Sigmoid colon (tissue), 7 donors: ENCODE measurements at regions of chr12 and their contacts with region 1.

Region 1: DNA sequence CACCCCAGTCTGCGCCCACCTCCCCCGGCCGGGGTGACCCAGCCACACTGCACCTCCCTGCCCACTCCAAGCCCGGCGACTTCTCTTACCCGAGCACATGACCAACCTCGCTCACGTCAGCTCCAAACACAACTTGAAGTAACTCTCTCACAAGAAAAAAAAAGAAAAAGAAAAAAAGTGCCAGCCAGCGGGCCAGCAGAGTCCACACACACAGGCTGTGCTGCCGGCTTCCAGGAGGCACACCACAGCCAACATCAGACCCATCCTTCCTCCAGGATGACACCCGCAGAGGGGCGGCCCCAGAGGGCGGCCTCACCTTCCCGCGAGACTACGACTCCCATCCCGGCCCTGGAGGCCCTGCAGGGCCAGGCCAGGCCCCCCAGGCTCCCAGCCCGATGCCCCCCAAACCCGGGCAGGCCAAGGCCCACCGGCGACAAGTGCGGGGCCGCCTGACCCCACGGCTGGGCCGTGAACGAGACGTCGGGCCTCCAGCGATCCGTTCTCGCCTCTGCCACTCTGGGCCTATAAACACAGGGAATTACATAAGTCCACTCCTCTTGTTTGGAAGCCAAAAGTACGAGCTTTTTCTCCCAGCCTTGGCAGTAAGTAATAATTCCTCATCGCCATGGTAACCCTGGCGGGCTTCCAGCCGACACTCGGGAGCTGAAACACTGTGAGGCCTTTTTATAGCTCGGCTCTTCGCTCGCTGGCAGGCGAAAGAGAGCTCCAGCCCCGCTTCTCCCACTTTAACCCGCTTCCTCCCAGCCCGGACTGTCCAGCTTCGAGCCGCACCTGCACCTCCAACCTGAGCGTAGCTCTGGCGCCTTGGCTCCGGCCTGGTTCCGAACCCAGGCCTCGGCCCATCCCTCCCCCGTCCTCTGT is 49.1 kb downstream of the NCOR2 start:
- DNase-seq: peak; percentile 100
- H3K4me3 ChIP-seq: peak overlapping the region; percentile 20 to 60 (median 54)
- H3K27ac ChIP-seq: peak overlapping the region; percentile 96 to 99 (median 98)
- H3K4me1 ChIP-seq: peaks cover 0 to 96% (median 91%) of the 10 kb centered on the region in 4 donors
- H3K27me3 ChIP-seq: no peaks in the 10 kb centered on the region
- CTCF ChIP-seq: no peak
- EP300 ChIP-seq: peak in 1 of 4 donors; percentile 78
- POLR2A ChIP-seq: peak; percentile 28 to 45

Region 2: DNA sequence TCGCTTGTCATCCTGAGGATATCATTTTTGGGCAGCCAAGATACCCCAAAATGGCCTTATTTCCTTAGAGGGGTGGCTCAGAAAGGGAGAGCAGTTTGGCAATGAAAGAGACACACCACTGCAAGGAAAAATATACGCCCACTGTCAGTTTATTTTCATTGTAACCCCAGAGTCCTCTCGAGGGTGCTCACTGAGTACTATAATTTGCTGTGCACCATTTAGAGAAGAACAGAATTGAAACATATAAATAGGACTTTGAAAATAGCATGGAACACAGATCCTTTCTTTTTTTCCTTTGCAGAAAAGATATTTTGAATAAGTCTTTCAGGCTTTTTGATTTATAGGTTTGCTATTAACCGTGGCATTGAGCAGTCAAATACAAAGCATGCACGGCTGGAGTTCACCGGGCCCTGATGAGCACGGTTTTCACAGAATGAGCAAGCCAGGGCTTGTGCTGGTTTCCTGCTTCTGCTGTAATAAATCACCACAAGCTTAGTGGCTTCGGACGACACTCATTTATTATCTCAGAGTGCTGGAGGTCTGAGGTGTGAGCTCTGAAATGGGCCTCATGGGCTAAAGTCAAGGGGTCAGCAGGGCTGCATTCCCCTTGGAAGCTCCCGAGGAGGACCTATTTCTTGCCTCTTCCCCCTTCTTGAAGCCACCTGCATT is 393.0 kb before region 1 on chr12:
- intact Hi-C with region 1: no loop called
- DNase-seq: no peak
- H3K4me3 ChIP-seq: no peak overlapping the region
- H3K27ac ChIP-seq: no peak overlapping the region
- H3K4me1 ChIP-seq: no peaks in the 10 kb centered on the region
- H3K27me3 ChIP-seq: no peaks in the 10 kb centered on the region
- CTCF ChIP-seq: no peak
- EP300 ChIP-seq: no peak
- POLR2A ChIP-seq: no peak

Region 3: DNA sequence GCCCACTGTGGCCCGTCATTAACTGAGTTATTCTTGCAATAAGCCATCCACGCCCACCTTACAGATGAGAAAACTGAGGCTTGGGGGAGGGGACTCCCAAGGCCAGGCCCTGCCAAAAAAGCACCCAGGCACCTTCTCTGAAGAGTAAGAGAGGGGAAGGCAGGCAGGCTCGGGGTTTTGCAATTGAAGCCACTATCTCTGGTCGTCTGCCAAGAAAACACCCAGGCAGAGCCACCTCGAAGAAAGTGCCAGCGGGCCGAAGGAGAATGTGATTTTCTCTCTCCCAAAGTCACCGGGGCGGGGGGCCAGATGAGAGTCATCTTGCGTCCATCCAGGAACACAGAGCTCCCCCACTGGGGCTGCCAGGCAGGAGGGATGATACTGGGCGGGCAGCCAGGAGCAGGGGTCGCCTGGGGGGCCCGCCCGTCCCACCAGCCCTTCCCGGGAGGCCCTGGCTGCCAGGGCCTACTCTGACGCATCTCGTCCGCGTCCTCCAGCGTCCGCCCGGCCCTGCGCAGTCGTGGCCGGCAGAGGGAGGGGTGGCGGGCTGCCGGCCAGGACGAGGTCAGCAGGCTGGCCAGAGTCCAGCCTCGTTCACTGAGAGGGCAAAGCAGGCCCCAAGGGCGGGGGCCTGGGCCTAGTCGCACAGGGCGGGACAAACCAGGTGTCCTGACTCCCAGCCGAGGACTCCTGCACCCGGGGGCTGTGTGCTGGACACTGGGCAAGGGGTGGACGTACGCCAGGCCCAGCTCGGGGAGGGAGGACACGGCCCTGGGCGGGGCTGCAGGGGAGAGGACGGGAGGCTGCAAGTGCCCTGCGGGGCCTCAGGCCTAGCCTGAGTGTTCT is 149.0 kb before region 1 on chr12:
- intact Hi-C with region 1: loop called (anchors 2 kb)
- DNase-seq: peak; percentile 97
- H3K4me3 ChIP-seq: peak overlapping the region in 2 of 4 donors; percentile 2 to 12
- H3K27ac ChIP-seq: peak overlapping the region; percentile 88 to 97 (median 92)
- H3K4me1 ChIP-seq: peaks cover 0 to 65% (median 63%) of the 10 kb centered on the region in 4 donors
- H3K27me3 ChIP-seq: no peaks in the 10 kb centered on the region
- CTCF ChIP-seq: peak; percentile 53 to 56 (median 53)
- EP300 ChIP-seq: peak in 3 of 4 donors; percentile 47 to 78 (median 52)
- POLR2A ChIP-seq: peak in 1 of 2 donors; percentile 12

Region 4: GRCh38 chr12:124379938-124380754 is 138.1 kb before region 1 on chr12:
- intact Hi-C with region 1: loop called (anchors 5 kb)
- DNase-seq: peak; percentile 94
- H3K4me3 ChIP-seq: no peak overlapping the region
- H3K27ac ChIP-seq: peak overlapping the region; percentile 94 to 99 (median 96)
- H3K4me1 ChIP-seq: peaks cover 0 to 64% (median 53%) of the 10 kb centered on the region in 4 donors
- H3K27me3 ChIP-seq: no peaks in the 10 kb centered on the region
- CTCF ChIP-seq: peak; percentile 65 to 71 (median 68)
- EP300 ChIP-seq: peak in 2 of 4 donors; percentile 1 to 21
- POLR2A ChIP-seq: no peak

Region 5: DNA sequence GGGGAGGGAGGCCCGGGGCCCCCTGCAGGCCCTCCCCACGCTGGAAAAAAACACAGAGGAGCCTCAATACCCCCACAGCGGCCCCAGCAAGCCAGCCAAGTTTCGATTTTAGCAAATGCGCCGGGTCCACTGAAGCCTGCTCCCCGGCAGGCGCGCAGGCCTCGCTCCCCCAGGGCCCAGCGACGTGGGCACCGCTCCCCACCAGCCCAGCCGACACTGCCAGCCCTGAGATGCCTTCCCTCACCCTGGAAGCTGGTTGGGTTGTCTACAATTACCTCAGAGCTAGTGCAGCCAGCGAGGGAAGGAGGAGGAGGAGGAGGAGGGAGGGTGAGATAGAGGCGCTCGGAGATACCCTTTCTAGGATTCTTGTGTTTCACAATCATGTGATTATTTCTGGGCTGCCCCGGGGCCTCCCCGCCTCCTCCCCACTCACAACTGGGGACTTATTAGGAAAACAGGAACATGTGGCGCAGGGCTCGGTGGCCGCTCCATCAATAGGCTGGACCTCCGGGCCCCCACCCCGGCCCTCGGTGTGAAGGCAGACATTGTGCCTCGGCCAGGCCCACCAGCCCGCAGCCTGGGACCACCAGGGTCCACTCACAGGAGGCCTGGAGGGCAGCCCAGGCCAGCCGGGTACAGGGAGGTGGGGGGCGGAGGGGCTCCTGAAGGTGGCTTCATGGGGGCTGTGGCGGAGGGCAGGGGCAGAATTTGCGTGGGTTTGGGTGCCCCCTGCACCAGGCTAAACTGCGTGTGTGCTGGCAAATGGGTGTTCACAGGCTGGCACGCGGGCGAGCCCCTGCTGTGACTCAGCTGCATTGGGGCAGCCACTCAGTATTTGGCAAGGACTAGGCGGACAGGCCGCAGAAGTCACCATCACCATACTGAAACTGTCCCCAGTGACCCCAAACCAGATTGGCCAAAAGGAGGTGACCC is 60.7 kb before region 1 on chr12:
- intact Hi-C with region 1: loop called (anchors 5 kb)
- DNase-seq: peak; percentile 95
- H3K4me3 ChIP-seq: peak overlapping the region; percentile 23 to 53 (median 42)
- H3K27ac ChIP-seq: peak overlapping the region; percentile 92 to 97 (median 94)
- H3K4me1 ChIP-seq: peaks cover 0 to 71% (median 67%) of the 10 kb centered on the region in 4 donors
- H3K27me3 ChIP-seq: no peaks in the 10 kb centered on the region
- CTCF ChIP-seq: peak in 1 of 4 experiments; percentile 14
- EP300 ChIP-seq: peak in 2 of 4 donors; percentile 28 to 77
- POLR2A ChIP-seq: peak; percentile 53 to 71

Region 6: GRCh38 chr12:124493809-124494750 is 24.2 kb before region 1 on chr12:
- intact Hi-C with region 1: no loop called
- DNase-seq: no peak
- H3K4me3 ChIP-seq: no peak overlapping the region
- H3K27ac ChIP-seq: peak overlapping the region in 2 of 4 donors; percentile 13 to 25
- H3K4me1 ChIP-seq: peaks cover 0 to 70% (median 51%) of the 10 kb centered on the region in 4 donors
- H3K27me3 ChIP-seq: no peaks in the 10 kb centered on the region
- CTCF ChIP-seq: no peak
- EP300 ChIP-seq: no peak
- POLR2A ChIP-seq: no peak

Region 7: GRCh38 chr12:124538194-124539082 is 20.1 kb after region 1 on chr12:
- intact Hi-C with region 1: no loop called
- DNase-seq: no peak
- H3K4me3 ChIP-seq: no peak overlapping the region
- H3K27ac ChIP-seq: peak overlapping the region; percentile 48 to 72 (median 68)
- H3K4me1 ChIP-seq: peaks cover 0 to 62% (median 58%) of the 10 kb centered on the region in 4 donors
- H3K27me3 ChIP-seq: no peaks in the 10 kb centered on the region
- CTCF ChIP-seq: no peak
- EP300 ChIP-seq: no peak
- POLR2A ChIP-seq: no peak

Region 8: DNA sequence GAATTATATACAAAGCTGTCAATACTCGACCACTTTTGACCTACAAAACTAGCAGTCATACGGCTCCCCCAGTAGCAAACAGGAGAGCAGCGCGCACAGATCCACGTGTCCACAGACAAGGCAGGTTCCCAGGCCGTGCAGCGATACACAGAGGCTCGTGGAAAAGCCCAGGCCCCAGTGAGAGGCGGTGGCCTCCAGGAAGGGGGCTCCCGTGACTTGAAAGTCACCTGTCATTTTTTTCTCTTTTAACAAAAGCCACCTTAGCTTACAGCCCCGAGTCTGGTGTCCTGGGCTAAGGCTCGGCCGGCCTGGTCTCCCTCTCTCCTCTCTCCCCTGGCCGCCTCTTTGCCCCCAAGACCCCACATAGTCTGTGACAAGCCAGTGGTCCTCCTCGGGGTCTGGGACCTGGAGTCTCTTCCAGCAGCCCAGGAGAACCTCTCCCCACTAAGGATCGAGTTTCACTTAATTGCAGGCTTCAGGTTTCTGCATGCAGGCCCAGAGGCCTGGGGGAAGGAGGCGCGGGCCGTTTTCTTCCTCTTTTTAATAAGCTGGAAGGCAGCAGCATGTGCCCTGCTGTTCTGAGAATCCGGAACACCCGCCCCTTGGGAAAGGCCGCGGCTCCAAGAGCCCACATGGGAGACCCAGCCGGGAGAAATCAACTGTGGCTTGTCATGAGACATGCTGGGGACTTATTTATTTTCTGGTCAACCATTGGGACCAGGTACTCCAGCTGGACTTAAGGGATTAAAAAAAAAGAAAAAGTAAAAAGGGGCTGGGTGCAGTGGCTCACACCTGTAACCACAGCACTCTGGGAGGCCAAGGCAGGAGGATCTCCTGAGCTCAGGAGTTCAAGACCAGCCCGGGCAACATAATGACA is 33.2 kb after region 1 on chr12:
- intact Hi-C with region 1: loop called (anchors 2 kb)
- DNase-seq: peak; percentile 85
- H3K4me3 ChIP-seq: no peak overlapping the region
- H3K27ac ChIP-seq: peak overlapping the region; percentile 68 to 87 (median 82)
- H3K4me1 ChIP-seq: peaks cover 0 to 86% (median 80%) of the 10 kb centered on the region in 4 donors
- H3K27me3 ChIP-seq: no peaks in the 10 kb centered on the region
- CTCF ChIP-seq: no peak
- EP300 ChIP-seq: no peak
- POLR2A ChIP-seq: no peak

Region 9: GRCh38 chr12:124567661-124568373 is 49.5 kb after region 1 on chr12:
- intact Hi-C with region 1: loop called (anchors 1 kb)
- DNase-seq: peak; percentile 98
- H3K4me3 ChIP-seq: peak overlapping the region; percentile 4 to 96 (median 56)
- H3K27ac ChIP-seq: peak overlapping the region; percentile 91 to 100 (median 98)
- H3K4me1 ChIP-seq: peaks cover 0 to 56% (median 53%) of the 10 kb centered on the region in 4 donors
- H3K27me3 ChIP-seq: no peaks in the 10 kb centered on the region
- CTCF ChIP-seq: no peak
- EP300 ChIP-seq: peak in 2 of 4 donors; percentile 56 to 69
- POLR2A ChIP-seq: no peak

Region 10: DNA sequence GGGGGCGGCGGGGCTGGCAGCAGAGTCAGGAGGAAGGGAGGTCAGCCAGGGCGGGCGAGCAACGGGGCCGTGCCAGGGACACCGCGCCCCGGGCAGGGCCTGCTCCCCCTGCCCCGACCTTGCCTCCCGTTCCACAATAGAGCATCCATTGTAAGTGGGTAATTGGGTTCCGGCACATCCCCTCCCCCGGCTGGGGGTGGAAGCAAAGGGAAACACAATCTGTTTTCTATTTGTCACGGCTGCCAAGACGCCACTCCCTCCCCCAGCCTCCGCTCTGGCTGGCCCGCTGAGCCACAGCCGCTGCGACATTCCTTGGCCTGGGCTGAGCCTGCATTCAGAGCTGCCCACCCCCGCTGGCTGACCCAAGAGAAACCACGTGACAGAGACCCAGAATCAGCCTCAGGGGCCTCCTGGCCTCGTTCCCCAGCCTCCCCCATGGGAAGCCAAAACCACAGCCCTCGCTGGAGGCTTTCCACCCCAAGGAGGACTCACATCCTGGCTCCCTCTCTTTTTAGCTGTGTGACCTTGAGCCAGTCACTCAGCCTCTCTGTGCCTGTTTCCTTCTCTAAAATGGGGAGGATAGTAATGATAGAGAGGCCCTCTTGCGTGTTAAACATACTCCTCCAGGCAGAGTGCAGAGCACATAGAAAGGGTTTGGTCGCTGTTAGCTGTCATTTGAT is 227.7 kb after region 1 on chr12:
- intact Hi-C with region 1: loop called (anchors 5 kb)
- DNase-seq: peak; percentile 98
- H3K4me3 ChIP-seq: peak overlapping the region in 2 of 4 donors; percentile 23 to 30
- H3K27ac ChIP-seq: peak overlapping the region; percentile 87 to 95 (median 92)
- H3K4me1 ChIP-seq: peaks cover 0 to 76% (median 70%) of the 10 kb centered on the region in 4 donors
- H3K27me3 ChIP-seq: no peaks in the 10 kb centered on the region
- CTCF ChIP-seq: no peak
- EP300 ChIP-seq: peak in 3 of 4 donors; percentile 66 to 84 (median 73)
- POLR2A ChIP-seq: no peak

Region 11: DNA sequence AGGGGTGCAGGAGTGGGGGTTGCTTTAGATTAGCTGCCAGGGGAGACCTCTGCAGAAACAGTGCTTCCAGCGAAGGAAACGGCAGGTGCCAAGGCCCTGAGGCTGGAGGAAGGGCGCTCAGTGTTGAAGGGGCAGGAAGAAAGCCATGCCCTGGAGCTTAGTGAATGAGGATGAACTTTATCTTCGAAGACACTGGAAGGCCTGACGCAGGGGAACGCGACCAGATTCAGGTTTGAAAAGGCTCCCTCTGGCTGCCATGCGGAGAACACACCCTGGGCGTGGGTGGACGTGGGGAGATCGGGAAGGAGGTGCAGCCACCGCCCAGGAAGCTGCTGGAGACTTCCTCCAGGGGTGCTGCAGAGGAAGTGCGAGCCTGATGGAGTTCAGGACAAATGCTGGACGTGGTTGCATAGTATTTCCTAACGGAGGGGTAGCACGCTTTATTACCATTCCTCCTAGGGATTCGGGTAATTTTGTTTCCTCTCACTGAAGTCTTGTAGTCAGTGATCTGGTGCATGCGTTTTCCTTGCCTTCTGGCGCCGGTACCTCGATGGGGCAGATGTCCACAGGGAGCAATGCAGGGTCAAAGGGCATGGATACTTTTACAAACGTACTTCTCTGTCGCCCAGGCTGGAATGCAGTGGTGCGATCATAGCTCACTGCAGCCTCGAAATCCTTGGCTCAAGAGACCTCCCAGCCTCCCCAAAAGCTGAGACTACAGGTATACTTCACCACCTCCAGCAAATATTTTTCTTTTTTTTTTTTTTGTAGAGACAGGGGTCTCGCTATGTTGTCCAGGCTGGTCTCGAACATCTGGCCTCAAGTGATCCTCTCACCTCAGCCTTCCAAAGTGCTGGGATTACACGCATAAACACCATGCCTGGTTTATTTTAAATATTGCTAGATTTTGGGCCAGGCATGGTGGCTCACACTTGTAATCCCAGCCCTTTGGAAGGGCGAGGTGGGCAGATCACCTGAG is 422.5 kb after region 1 on chr12:
- intact Hi-C with region 1: no loop called
- DNase-seq: peak; percentile 96
- H3K4me3 ChIP-seq: peak overlapping the region in 3 of 4 donors; percentile 46 to 51 (median 49)
- H3K27ac ChIP-seq: peak overlapping the region; percentile 84 to 96 (median 87)
- H3K4me1 ChIP-seq: peaks cover 0 to 30% (median 26%) of the 10 kb centered on the region in 4 donors
- H3K27me3 ChIP-seq: no peaks in the 10 kb centered on the region
- CTCF ChIP-seq: peak; percentile 90 to 97 (median 95)
- EP300 ChIP-seq: no peak
- POLR2A ChIP-seq: no peak